ENCODE measurements at regions of chr2 and their contacts with region 1.

Region 1: DNA sequence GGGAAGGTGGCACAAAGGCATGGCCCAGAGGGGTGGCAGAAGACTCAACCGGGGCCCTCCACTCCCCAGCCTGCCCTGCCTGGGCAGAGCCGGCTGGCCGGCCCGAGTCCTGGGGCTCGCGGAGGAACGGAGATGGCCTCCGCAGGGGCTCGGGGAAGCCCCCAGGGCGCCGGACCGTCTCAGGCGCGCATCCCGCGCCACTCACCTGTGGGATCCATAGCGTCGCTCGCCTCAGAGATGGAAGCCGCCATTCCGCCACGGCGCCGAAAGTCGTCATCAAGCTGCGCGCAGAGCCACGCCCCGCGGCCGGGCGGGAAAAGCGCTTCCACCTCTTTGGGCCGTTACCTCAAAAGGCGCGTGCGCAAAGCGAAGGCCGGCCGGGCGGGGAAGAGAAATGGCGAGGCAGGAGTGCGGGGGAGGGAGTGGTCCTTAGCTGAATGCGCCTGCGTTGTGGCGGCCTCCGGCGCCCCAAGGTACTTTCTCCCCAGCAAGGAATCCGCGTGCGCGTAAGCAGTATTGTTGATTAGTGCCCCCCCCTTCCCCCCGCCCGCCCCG is at the start of gene SMPD4:
- DNase-seq: peak; percentile 97
- H3K4me3 Mint-ChIP-seq: peak within 1 kb of the TSS; percentile 93
- H3K27ac Mint-ChIP-seq: peak within 1 kb of the TSS; percentile 92
- H3K4me1 Mint-ChIP-seq: no peaks in the 10 kb centered on the region
- H3K27me3 Mint-ChIP-seq: no peaks in the 10 kb centered on the region
- total RNA-seq, gene SMPD4: 92.3 and 99.0 TPM in 2 replicates

Region 2: GRCh38 chr2:129929321-129930290 is 251.8 kb before region 1 on chr2:
- intact Hi-C with region 1: no loop called
- DNase-seq: no peak
- H3K4me3 Mint-ChIP-seq: no peak overlapping the region
- H3K27ac Mint-ChIP-seq: no peak overlapping the region
- H3K4me1 Mint-ChIP-seq: no peaks in the 10 kb centered on the region
- H3K27me3 Mint-ChIP-seq: peaks cover 19% of the 10 kb centered on the region

Region 3: GRCh38 chr2:130150181-130151144 is 30.9 kb before region 1 on chr2:
- intact Hi-C with region 1: loop called (anchors 5 kb)
- DNase-seq: no peak
- H3K4me3 Mint-ChIP-seq: no peak overlapping the region
- H3K27ac Mint-ChIP-seq: no peak overlapping the region
- H3K4me1 Mint-ChIP-seq: no peaks in the 10 kb centered on the region
- H3K27me3 Mint-ChIP-seq: no peaks in the 10 kb centered on the region

Region 4: DNA sequence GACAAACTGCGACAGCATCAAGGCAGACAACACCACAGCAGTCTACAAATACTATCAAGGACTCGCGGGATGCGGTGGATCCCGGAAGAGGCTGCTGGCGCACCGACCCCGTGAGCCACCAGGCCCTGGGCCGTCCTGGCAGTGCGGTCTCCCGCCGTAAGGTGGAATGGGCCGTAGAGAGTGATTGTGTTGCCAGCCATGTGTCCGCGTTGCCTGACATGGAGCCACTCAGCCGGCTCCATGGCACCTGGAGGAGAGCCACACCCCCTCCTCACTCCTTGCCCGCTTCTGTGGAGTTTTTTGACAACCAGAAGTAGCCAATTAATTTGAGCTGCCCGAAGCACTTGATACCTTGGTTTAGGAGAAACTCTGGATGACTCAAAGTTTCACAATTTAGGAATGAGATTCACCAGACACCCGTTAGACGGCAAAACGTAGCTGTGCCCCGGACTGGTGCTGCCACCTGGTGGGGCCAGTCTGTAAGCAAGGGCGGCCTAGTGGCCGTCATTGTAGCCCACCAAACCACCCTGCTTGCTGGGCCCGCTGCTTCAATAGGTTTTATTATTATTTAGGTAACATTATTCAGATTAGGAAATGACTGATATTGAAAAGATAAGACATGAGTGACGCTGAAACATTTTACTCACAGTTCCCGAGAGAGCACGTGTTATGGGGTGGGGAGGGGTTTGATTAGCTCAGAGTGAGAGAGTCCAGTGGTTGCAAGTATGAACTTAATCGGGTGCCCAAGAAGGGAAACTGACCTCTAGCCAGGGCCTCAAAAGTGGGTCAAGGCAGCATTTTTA is 151.1 kb after region 1 on chr2:
- intact Hi-C with region 1: loop called (anchors 1 kb)
- DNase-seq: peak; percentile 45
- H3K4me3 Mint-ChIP-seq: peak overlapping the region; percentile 44
- H3K27ac Mint-ChIP-seq: no peak overlapping the region
- H3K4me1 Mint-ChIP-seq: peaks cover 5% of the 10 kb centered on the region
- H3K27me3 Mint-ChIP-seq: peaks cover 25% of the 10 kb centered on the region

Region 5: DNA sequence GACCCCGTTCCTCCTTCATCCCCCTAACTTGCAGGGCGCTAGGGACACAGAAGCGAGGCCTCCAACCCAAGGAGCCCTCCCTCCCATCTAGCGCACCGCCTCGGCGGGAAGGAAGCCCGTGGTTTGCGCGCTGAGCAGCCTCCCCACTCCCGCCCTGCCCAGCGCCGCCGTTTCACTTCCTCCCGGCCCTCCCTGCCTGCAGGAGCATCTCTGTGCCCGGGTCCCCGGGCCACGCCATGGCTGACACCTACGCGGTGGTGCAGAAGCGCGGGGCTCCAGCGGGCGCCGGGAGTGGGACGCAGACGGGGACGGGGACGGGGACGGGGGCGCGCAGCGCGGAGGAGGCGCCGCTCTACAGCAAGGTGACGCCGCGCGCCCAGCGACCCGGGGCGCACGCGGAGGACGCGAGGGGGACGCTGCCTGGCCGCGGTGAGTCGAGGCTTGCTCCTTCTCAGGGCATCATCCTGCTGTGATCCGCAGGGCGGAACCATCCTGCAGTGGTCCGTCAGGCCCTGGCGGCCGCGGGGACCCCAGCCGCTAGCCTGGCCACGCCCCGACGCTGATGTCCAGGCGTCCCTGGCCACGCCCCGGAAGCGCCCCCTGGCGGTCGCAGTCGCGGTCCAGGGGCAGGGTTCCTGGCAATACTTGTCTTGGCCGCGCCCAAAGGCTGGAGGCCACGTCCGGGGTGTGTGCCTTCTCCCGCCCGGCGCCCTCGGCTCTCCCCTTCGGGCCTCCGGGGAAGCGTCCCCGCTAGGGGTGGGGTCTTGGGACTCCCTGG is 190.8 kb after region 1 on chr2:
- intact Hi-C with region 1: loop called (anchors 1 kb)
- DNase-seq: peak; percentile 78
- H3K4me3 Mint-ChIP-seq: peak overlapping the region; percentile 96
- H3K27ac Mint-ChIP-seq: peak overlapping the region; percentile 96
- H3K4me1 Mint-ChIP-seq: peaks cover 59% of the 10 kb centered on the region
- H3K27me3 Mint-ChIP-seq: peaks cover 4% of the 10 kb centered on the region

Region 6: DNA sequence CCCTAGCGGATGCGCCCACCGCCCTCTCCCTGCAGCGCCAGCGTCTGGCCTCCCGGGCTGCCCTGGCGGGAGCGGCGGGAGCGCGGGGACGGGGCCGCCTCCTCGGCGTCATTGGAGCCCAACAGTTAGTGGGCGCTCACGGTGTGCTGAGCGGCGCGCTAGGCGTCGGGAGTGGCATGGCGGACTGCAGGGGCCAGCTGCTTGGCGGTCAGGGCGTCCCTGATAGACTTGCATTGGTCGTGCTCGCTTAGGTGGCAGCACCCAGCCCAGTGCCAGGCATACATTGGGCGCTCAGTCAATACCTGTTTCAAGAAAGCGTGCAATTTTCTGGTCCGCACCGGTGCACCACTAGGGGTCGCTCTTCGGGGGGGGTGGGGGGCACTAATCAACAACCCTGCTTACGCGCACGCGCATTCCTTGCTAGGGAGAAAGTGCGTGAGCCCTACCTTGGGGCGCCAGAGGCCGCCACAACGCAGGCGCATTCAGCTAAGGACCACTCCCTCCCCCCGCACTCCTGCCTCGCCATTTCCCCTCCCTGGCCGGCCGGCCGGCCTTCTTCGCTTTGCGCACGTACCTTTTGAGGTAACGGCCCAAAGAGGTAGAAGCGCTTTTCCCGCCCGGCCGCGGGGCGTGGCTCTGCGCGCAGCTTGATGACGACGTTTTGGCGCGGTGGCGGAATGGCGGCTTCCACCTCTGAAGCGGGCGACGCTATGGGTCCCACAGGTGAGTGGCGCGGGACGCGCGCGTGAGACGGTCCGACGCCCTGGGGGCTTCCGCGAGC is 1311.2 kb after region 1 on chr2:
- intact Hi-C with region 1: loop called (anchors 5 kb)
- DNase-seq: peak; percentile 89
- H3K4me3 Mint-ChIP-seq: peak overlapping the region; percentile 98
- H3K27ac Mint-ChIP-seq: peak overlapping the region; percentile 97
- H3K4me1 Mint-ChIP-seq: peaks cover 18% of the 10 kb centered on the region
- H3K27me3 Mint-ChIP-seq: no peaks in the 10 kb centered on the region